Naive thymus-derived CD8-positive, alpha-beta T cell (primary cell): ENCODE measurements at regions of chr7 and their contacts with region 1.

Region 1: DNA sequence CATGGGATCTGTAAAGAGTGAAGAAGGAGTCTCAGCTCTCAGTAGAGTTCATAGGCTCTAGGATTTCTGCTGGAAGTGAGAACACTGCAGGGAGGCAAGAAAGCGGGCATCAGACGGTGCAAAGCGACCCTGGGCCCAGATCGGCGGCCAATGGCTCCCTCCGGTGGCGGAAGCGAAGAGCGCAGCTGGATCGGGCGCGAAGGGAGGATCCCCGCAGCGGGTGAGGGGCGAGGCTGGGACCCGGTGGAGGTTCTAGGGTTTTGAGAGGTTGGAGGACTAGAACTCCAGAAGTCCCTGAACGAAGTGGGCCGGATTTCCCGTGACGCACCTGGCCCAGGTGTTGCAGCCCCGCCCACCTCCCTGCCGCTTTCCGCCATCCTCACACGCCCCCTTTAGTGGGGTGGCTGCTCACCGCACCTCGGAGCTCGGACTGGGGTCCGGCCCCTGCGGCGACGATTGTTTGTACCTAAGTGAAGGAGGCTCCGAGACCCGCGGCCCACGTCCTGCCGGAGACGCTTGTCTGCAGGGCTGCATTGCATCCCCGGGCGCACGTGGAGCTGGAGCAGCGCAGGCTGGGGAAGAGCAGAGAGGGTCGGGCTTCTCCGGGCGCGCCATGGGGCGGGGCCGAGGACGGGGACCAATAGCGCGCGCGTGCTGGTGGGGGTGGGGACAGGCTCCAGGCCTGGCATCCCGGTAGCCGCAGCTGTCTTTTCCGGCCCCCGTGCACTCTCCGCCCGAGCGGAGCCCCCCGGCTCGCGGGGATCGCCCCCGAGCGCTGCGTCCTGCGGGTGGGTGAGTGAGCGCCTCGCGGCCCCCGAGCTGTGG is at the start of gene SLC12A9:
- DNase-seq: peak; percentile 72 to 90 (median 83)
- ATAC-seq: peak; percentile 92 to 95
- H3K4me3 Mint-ChIP-seq: peak within 1 kb of the TSS; percentile 87 to 95 (median 92)
- H3K27ac Mint-ChIP-seq: peak within 1 kb of the TSS; percentile 79 to 98 (median 90)
- H3K4me1 Mint-ChIP-seq: peaks cover 12 to 39% (median 28%) of the 10 kb centered on the region in 4 donors
- H3K27me3 Mint-ChIP-seq: no peaks in the 10 kb centered on the region
- polyA plus RNA-seq, gene SLC12A9: 6.8 to 9.4 (median 8.0) TPM

Region 2: GRCh38 chr7:100874577-100875355 is 22.5 kb after region 1 on chr7 and contains the start of gene SRRT:
- POLR2A ChIA-PET with region 1: interaction called, 31 read pairs
- DNase-seq: peak; percentile 95 to 99 (median 98)
- ATAC-seq: peak; percentile 94 to 95
- H3K4me3 Mint-ChIP-seq: peak within 1 kb of the TSS; percentile 95 to 99 (median 98)
- H3K27ac Mint-ChIP-seq: peak within 1 kb of the TSS; percentile 96 to 99 (median 98)
- H3K4me1 Mint-ChIP-seq: peaks cover 14 to 53% (median 49%) of the 10 kb centered on the region in 4 donors
- H3K27me3 Mint-ChIP-seq: peaks cover 0 to 3% (median 0%) of the 10 kb centered on the region in 5 donors
- polyA plus RNA-seq, gene SRRT: 51.1 to 69.4 (median 63.2) TPM

Region 3: GRCh38 chr7:100897772-100898454 is 45.7 kb after region 1 on chr7:
- POLR2A ChIA-PET with region 1: no interaction called
- DNase-seq: no peak
- ATAC-seq: no peak
- H3K4me3 Mint-ChIP-seq: peak overlapping the region; percentile 51 to 78 (median 69)
- H3K27ac Mint-ChIP-seq: no peak overlapping the region
- H3K4me1 Mint-ChIP-seq: peaks cover 10 to 15% (median 12%) of the 10 kb centered on the region in 4 donors
- H3K27me3 Mint-ChIP-seq: peaks cover 17 to 51% (median 32%) of the 10 kb centered on the region in 5 donors

Region 4: DNA sequence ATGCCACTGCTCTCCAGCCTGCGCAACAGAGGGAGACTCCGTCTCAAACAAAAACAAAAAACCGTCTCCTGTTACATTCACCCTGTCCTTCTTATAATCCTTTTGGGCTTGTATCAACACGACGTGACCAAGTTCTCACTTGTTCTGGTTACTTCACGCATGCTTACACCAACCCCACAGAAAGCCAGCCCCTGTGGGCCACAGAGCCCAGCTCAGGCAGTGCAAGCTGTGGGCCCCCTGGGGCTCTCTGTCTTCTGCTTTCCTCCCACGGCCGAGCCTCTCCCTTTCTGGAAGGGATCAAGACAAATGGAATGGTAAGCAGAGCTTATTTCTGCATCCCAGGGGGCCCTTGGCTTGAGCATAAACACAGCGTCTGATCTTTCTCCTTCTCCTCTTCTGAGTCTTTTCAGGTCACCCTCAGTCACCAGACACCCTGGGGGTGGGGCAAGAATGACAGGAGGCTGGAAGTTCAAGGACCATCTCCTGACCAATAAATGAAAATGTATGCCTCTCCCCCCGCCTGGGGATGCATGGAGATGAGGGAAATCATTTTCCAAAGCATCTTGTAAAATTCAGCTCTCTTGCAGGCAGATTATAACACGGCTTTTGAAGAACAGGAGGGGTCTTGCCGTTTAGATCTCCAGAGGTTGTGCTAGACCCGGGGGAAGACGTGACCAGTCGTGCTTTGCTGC is 214.0 kb after region 1 on chr7:
- POLR2A ChIA-PET with region 1: interaction called, 10 read pairs
- DNase-seq: no peak
- ATAC-seq: no peak
- H3K4me3 Mint-ChIP-seq: no peak overlapping the region
- H3K27ac Mint-ChIP-seq: no peak overlapping the region
- H3K4me1 Mint-ChIP-seq: no peaks in the 10 kb centered on the region
- H3K27me3 Mint-ChIP-seq: peaks cover 21 to 50% (median 37%) of the 10 kb centered on the region in 5 donors